CD4-positive, alpha-beta T cell (primary cell): ENCODE measurements at regions of chr10 and their contacts with region 1.

Region 1: DNA sequence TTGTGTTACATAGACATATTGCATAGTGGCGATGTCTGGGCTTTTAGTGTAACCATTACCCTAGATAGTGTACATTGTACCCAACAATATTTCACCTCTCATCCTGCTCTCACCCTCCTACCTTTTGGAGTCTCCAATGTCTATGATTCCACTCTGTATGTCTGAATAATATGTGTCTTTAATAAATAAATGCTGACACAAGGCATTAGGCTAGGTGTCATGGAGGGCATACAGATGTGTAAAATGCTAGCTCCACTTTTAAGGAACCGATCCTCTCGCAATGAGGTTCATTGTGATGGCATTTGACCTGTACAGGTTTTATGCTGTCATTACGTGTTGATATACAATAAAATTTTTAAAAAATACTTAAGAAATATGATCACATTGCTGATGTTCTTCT is 74.3 kb downstream of the NEBL start:
- DNase-seq: no peak
- ATAC-seq: no peak
- H3K4me3 ChIP-seq: no peak overlapping the region
- H3K4me3 Mint-ChIP-seq: no peak overlapping the region
- H3K27ac ChIP-seq: no peak overlapping the region
- H3K27ac Mint-ChIP-seq: no peak overlapping the region
- H3K4me1 ChIP-seq: no peaks in the 10 kb centered on the region
- H3K4me1 Mint-ChIP-seq: no peaks in the 10 kb centered on the region
- H3K27me3 ChIP-seq: no peaks in the 10 kb centered on the region
- H3K27me3 Mint-ChIP-seq: no peaks in the 10 kb centered on the region
- CTCF ChIP-seq: no peak

Region 2: DNA sequence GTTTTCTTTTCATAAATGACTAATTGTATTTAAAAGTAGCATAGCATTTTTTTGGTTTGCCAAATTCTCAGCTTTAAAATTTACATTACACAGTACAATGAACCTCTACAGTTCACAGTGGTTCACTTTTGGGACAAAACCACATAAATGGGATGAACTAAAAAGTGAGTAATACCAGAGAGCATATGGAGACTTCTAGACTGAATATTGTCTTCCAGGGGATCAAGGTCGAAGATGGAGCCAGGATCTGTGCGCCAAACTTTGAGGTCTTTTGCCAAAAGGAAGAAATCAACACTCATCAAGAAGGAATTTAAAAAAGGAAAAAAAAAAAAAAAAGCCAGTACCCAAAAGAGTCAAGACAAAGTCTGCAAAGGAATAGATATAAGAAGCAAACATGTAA is 13.2 kb before region 1 on chr10:
- CTCF ChIA-PET with region 1: no interaction called
- POLR2A ChIA-PET with region 1: no interaction called
- intact Hi-C with region 1: loop called in 1 of 2 experiments (anchors 2 kb)
- DNase-seq: no peak
- ATAC-seq: no peak
- H3K4me3 ChIP-seq: no peak overlapping the region
- H3K4me3 Mint-ChIP-seq: no peak overlapping the region
- H3K27ac ChIP-seq: no peak overlapping the region
- H3K27ac Mint-ChIP-seq: no peak overlapping the region
- H3K4me1 ChIP-seq: no peaks in the 10 kb centered on the region
- H3K4me1 Mint-ChIP-seq: no peaks in the 10 kb centered on the region
- H3K27me3 ChIP-seq: no peaks in the 10 kb centered on the region
- H3K27me3 Mint-ChIP-seq: no peaks in the 10 kb centered on the region
- CTCF ChIP-seq: no peak